ENCODE measurements at regions of chr18 and their contacts with region 1.

Region 1: DNA sequence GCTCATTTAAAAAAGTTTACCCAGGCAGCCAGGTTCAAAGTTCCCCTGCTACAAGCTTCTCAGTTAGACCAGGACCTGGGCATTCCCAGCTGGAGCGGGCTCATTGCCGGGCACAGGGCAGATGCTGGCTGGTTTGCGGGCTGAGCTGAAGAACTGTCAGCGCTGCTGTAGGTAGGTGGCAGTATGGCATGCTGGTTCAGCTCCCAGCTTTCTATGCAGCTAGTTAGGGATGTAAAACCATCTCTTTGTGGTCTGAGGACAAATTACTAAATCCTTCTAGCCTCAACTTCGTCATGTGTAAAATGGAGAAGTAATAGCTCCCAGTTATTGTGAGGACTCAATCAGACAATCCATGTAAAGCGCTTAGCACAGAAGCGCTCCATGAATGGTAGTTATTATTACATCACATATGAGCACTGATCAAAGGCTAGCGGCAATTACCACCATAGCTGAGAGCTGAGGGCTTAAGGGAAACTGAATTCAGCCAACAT is 2.4 kb upstream of the LDLRAD4 start:
- DNase-seq: peak in 3 of 5 donors; percentile 35 to 49 (median 48)
- H3K4me3 ChIP-seq: no peak overlapping the region
- H3K27ac ChIP-seq: no peak overlapping the region
- H3K4me1 ChIP-seq: peaks cover 5% of the 10 kb centered on the region
- H3K27me3 ChIP-seq: no peaks in the 10 kb centered on the region
- CTCF ChIP-seq: peak in 2 of 3 donors; percentile 17 to 46
- EP300 ChIP-seq: no peak
- POLR2A ChIP-seq: no peak

Region 2: GRCh38 chr18:12005538-12006487 is 1210.3 kb before region 1 on chr18:
- intact Hi-C with region 1: no loop called
- DNase-seq: peak in 1 of 5 donors; percentile 21
- H3K4me3 ChIP-seq: no peak overlapping the region
- H3K27ac ChIP-seq: no peak overlapping the region
- H3K4me1 ChIP-seq: peaks cover 1% of the 10 kb centered on the region
- H3K27me3 ChIP-seq: no peaks in the 10 kb centered on the region
- CTCF ChIP-seq: no peak
- EP300 ChIP-seq: no peak
- POLR2A ChIP-seq: no peak

Region 3: GRCh38 chr18:13179566-13180113 is 36.5 kb before region 1 on chr18:
- intact Hi-C with region 1: no loop called
- DNase-seq: no peak
- H3K4me3 ChIP-seq: no peak overlapping the region
- H3K27ac ChIP-seq: no peak overlapping the region
- H3K4me1 ChIP-seq: peaks cover 3% of the 10 kb centered on the region
- H3K27me3 ChIP-seq: no peaks in the 10 kb centered on the region
- CTCF ChIP-seq: no peak
- EP300 ChIP-seq: no peak
- POLR2A ChIP-seq: no peak

Region 4: DNA sequence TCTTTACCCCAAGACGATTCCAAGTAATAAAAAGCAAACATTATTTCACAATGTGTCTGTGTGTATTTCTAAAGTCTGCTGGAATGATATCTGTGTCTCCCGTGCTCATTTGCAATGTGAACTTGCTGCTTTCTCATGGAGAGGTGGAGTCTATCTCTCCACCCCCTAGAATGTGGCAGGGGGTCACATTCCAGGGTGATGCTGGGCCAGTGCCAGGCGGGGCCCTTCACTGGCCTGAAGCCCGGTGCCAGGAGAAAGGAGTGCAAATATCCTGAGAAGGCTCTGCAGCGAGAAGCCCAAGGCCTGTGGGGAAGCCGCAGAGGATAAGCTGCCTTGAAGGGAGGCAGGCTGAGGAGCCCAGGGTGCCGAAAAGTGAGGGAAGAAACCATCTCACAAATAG is 24.4 kb before region 1 on chr18:
- intact Hi-C with region 1: no loop called
- DNase-seq: no peak
- H3K4me3 ChIP-seq: no peak overlapping the region
- H3K27ac ChIP-seq: no peak overlapping the region
- H3K4me1 ChIP-seq: no peaks in the 10 kb centered on the region
- H3K27me3 ChIP-seq: no peaks in the 10 kb centered on the region
- CTCF ChIP-seq: no peak
- EP300 ChIP-seq: no peak
- POLR2A ChIP-seq: no peak

Region 5: DNA sequence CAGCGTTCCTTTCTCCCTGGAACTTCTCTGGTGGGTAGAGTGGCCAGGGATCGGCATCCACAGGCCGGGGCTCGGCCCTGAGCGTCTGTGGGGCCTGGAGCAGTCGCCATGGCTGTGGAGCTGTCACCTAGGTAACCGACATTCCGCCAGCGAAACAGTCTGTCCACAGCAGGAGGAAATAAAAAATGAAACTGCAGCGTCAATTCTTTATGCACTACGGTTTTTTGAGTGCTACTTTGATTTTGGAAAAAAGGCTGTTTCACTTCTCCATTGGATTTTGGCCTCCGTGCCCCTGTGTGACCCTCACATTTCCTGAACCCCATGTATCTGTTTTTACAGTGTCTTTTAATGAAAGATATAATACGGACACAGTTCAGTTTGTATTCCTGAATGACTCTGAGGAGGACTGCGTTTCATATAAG is 165.8 kb after region 1 on chr18:
- intact Hi-C with region 1: loop called in 1 of 4 experiments (anchors 10 kb)
- DNase-seq: peak; percentile 18 to 63 (median 46)
- H3K4me3 ChIP-seq: peak overlapping the region; percentile 20
- H3K27ac ChIP-seq: no peak overlapping the region
- H3K4me1 ChIP-seq: peaks cover 6% of the 10 kb centered on the region
- H3K27me3 ChIP-seq: no peaks in the 10 kb centered on the region
- CTCF ChIP-seq: no peak
- EP300 ChIP-seq: no peak
- POLR2A ChIP-seq: no peak

Region 6: GRCh38 chr18:13500227-13500865 is 284.2 kb after region 1 on chr18:
- intact Hi-C with region 1: no loop called
- DNase-seq: no peak
- H3K4me3 ChIP-seq: no peak overlapping the region
- H3K27ac ChIP-seq: no peak overlapping the region
- H3K4me1 ChIP-seq: peaks cover 7% of the 10 kb centered on the region
- H3K27me3 ChIP-seq: no peaks in the 10 kb centered on the region
- CTCF ChIP-seq: no peak
- EP300 ChIP-seq: no peak
- POLR2A ChIP-seq: no peak

Region 7: GRCh38 chr18:13530879-13531387 is 314.8 kb after region 1 on chr18:
- intact Hi-C with region 1: loop called in 1 of 4 experiments (anchors 5 kb)
- DNase-seq: peak in 1 of 5 donors; percentile 39
- H3K4me3 ChIP-seq: no peak overlapping the region
- H3K27ac ChIP-seq: no peak overlapping the region
- H3K4me1 ChIP-seq: no peaks in the 10 kb centered on the region
- H3K27me3 ChIP-seq: no peaks in the 10 kb centered on the region
- CTCF ChIP-seq: no peak
- EP300 ChIP-seq: no peak
- POLR2A ChIP-seq: no peak

Region 8: DNA sequence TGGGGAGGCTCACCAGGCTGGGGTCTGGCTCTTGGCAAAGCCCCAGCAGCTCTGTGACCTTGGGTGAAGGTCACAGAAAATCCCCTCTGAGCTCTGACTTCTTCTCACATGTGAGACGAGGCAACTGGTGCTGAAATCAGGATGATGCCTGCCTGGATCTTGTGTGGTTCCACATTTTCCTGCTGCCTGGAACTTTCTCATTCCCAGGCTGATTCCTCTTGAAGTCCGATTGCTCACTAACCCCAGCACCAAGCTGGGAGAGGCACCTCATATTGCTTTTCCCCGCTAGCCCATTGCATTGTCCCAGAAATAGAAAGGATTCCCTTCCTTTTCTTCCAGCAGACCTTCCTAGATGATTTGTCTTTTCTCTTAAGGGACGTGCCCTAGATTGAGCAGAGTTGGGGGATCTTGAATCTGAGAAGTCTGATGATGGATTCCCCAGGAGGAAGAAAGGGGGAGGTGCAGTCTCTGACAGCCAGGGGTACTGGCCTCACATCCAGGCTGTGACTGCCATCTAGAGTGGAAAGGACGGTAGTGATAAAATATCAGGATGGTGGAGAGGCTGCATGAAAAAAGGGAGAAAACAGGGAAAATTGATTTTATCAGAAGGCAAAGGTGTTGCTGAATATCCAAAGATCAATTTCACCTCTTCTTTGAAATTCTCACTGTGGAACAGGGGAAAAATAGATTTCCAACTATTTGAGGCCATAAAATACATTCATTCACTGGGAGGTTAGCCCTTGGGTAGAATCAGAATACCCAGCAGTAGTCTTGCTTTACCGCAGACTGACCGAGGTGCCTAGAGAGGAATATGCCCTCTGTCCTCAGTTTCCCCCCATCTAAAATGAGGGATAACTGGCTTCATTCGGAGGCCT is 413.9 kb after region 1 on chr18:
- intact Hi-C with region 1: loop called in 2 of 4 experiments (anchors 5 to 10 kb)
- DNase-seq: peak in 3 of 5 donors; percentile 29 to 40 (median 40)
- H3K4me3 ChIP-seq: no peak overlapping the region
- H3K27ac ChIP-seq: no peak overlapping the region
- H3K4me1 ChIP-seq: no peaks in the 10 kb centered on the region
- H3K27me3 ChIP-seq: no peaks in the 10 kb centered on the region
- CTCF ChIP-seq: peak; percentile 42 to 68 (median 50)
- EP300 ChIP-seq: no peak
- POLR2A ChIP-seq: no peak

Region 9: DNA sequence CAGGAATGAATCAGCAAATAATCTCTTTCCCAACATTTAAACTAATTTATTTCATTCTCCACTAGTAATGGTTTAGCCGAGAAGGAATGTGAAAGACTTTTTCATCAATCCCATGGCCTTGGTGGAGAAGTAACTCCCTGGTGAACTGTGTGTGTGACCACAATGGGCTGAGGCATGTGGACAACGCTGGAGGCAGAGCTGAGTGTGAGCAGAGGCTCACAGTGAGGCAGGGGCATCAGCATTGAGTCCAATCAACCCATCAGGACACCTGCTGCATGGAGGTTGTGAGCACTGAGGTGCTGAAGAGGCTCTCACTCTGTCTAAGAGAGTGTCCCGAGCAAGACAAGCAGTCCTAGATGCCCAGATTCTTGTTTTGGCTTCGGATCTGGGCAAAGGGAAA is 837.5 kb after region 1 on chr18:
- intact Hi-C with region 1: loop called in 1 of 4 experiments (anchors 5 kb)
- DNase-seq: no peak
- H3K4me3 ChIP-seq: no peak overlapping the region
- H3K27ac ChIP-seq: no peak overlapping the region
- H3K4me1 ChIP-seq: no peaks in the 10 kb centered on the region
- H3K27me3 ChIP-seq: no peaks in the 10 kb centered on the region
- CTCF ChIP-seq: no peak
- EP300 ChIP-seq: no peak
- POLR2A ChIP-seq: no peak

Measured in ovary (tissue), 10 donors.